Activated naive CD4-positive, alpha-beta T cell treated with anti-CD3 and anti-CD28 coated beads, Interleukin-2, amount 10 ng/mL, durations not matched to agents 7 days and 5 days (primary cell): ENCODE measurements at regions of chr2 and their contacts with region 1.

Region 1: GRCh38 chr2:113173542-113174395 is at the start of gene PSD4:
- DNase-seq: peak; percentile 96
- H3K4me3 Mint-ChIP-seq: peak within 1 kb of the TSS; percentile 86
- H3K27ac Mint-ChIP-seq: peak within 1 kb of the TSS; percentile 88
- H3K4me1 Mint-ChIP-seq: peaks cover 76% of the 10 kb centered on the region
- H3K27me3 Mint-ChIP-seq: no peaks in the 10 kb centered on the region

Region 2: DNA sequence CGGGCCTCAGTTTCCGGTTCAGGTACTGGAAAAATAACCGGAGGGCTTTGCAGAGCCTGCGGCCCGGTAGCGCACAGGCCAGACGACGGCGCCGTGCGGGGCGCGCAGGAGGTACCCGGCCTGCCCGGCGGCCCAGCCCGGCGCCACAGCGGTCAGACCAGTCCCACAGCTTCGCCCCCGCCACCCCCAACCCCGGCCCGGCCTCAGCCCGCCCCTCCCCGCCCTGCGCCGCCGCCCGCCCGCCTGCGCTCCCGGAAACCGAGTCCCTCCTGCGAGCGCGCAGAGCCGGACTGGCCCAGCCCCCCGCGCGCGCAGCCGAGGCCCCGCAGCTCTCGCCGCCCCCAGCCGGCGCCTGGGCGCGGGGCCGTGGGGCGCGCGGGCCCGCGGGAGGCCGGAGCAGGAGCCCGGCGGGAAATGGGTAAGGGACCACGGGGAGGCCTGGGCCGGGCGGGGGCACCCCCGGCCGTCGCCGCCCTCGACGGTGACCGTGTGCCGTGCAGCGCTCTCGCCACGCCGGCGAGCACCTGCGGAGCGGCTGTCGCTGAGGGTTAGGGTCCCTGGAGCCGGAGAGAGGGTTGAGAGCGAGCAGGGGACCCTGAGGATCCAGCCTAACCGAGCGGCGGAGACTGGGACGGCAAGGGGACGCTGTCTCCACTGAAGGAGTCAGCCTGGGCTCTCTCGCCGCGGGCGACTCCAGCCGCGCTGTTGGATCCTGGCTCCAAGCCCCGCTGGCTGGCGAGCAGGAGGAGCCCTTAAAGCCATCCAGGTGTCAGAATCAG is 16.5 kb before region 1 on chr2:
- CTCF ChIA-PET with region 1: interaction called, 31 read pairs
- DNase-seq: peak; percentile 70
- H3K4me3 Mint-ChIP-seq: peak overlapping the region; percentile 80
- H3K27ac Mint-ChIP-seq: peak overlapping the region; percentile 83
- H3K4me1 Mint-ChIP-seq: peaks cover 28% of the 10 kb centered on the region
- H3K27me3 Mint-ChIP-seq: peaks cover 23% of the 10 kb centered on the region